ENCODE measurements at regions of chr1 and their contacts with region 1.

Region 1: GRCh38 chr1:173429471-173430402 is 47.4 kb upstream of the PRDX6 start:
- DNase-seq: peak; percentile 91
- H3K4me3 ChIP-seq: peak overlapping the region; percentile 43
- H3K27ac ChIP-seq: peak overlapping the region; percentile 75
- H3K27me3 ChIP-seq: no peaks in the 10 kb centered on the region
- CTCF ChIP-seq: peak; percentile 60

Region 2: GRCh38 chr1:173476664-173477285 is 47.0 kb after region 1 on chr1:
- CTCF ChIA-PET with region 1: interaction called, 23 read pairs
- POLR2A ChIA-PET with region 1: interaction called, 20 read pairs
- DNase-seq: no peak
- H3K4me3 ChIP-seq: peak overlapping the region; percentile 83
- H3K27ac ChIP-seq: peak overlapping the region; percentile 55
- H3K27me3 ChIP-seq: no peaks in the 10 kb centered on the region
- CTCF ChIP-seq: no peak

Region 3: GRCh38 chr1:173824331-173825081 is 394.8 kb after region 1 on chr1 and contains the starts of genes CENPL and DARS2:
- CTCF ChIA-PET with region 1: interaction called, 33 read pairs
- POLR2A ChIA-PET with region 1: interaction called, 6 read pairs
- DNase-seq: peak; percentile 96
- H3K4me3 ChIP-seq: peak within 1 kb of the TSS; percentile 98
- H3K27ac ChIP-seq: peak within 1 kb of the TSS; percentile 98
- H3K27me3 ChIP-seq: no peaks in the 10 kb centered on the region
- CTCF ChIP-seq: no peak
- polyA plus RNA-seq, gene CENPL: 5.8 and 8.7 TPM in 2 replicates
- polyA plus RNA-seq, gene DARS2: 20.2 and 25.1 TPM in 2 replicates

Measured in AG04450 (cell line).